Heart left ventricle (tissue), 16 donors: ENCODE measurements at regions of chr5 and their contacts with region 1.

Region 1: DNA sequence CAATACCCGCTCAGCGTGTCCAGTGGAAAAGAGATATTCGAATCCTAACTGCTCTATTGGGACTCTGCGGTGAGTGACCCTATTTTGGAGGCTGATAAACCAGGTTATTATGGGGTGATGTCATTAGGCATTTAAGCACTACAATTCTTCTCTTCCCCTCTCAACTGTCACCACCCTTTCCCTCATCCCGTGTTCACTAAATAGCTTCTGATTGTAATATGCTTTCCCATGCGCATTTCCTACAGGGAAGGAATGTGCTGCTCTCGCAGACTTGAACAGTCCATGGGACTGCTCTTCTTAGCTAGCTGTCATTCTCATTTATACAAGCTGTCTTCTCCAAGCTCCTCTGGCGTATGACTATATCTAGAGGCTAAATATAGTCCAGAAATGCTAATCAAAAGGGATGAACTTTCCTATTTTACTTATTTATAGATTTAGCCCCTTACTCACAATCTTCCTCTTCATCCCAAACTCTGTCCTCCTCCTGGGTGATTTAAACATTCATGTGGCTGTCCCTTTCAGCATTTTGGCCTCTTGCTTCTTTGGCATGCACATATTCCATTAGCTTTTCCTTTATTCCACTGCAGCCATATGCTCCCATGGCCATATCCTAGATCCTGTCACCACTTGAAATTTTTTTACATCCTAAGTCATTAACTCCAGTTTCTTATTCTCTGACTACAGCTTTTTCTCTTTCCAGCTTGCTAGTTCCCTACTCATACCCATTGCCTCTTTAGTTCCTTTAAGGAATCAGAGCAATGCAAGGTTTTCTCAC is 39.6 kb upstream of the CSNK1G3 start:
- DNase-seq: no peak
- ATAC-seq: peak; percentile 70 to 89 (median 78)
- H3K4me3 ChIP-seq: no peak overlapping the region
- H3K27ac ChIP-seq: peak overlapping the region in 4 of 12 donors; percentile 3 to 39 (median 22)
- H3K4me1 ChIP-seq: peaks cover 0 to 4% (median 0%) of the 10 kb centered on the region in 12 donors
- H3K27me3 ChIP-seq: no peaks in the 10 kb centered on the region
- CTCF ChIP-seq: no peak
- POLR2A ChIP-seq: no peak

Region 2: GRCh38 chr5:123448017-123448617 is 24.2 kb before region 1 on chr5:
- intact Hi-C with region 1: loop called in 1 of 10 experiments (anchors 2 kb)
- DNase-seq: no peak
- ATAC-seq: no peak
- H3K4me3 ChIP-seq: no peak overlapping the region
- H3K27ac ChIP-seq: no peak overlapping the region
- H3K4me1 ChIP-seq: peaks cover 0 to 9% (median 0%) of the 10 kb centered on the region in 12 donors
- H3K27me3 ChIP-seq: no peaks in the 10 kb centered on the region
- CTCF ChIP-seq: no peak
- POLR2A ChIP-seq: no peak